ENCODE measurements at regions of chr4 and their contacts with region 1.

Region 1: GRCh38 chr4:129822708-129823504 is 727.0 kb downstream of the C4orf33 start:
- DNase-seq: peak; percentile 12 to 18
- ATAC-seq: peak in 4 of 8 donors; percentile 11 to 49 (median 36)
- H3K4me3 ChIP-seq: no peak overlapping the region
- H3K27ac ChIP-seq: no peak overlapping the region
- H3K4me1 ChIP-seq: peaks cover 0 to 14% (median 0%) of the 10 kb centered on the region in 9 donors
- H3K27me3 ChIP-seq: no peaks in the 10 kb centered on the region
- CTCF ChIP-seq: no peak

Region 2: GRCh38 chr4:129852434-129852833 is 29.5 kb after region 1 on chr4:
- intact Hi-C with region 1: no loop called
- DNase-seq: no peak
- ATAC-seq: no peak
- H3K4me3 ChIP-seq: no peak overlapping the region
- H3K27ac ChIP-seq: no peak overlapping the region
- H3K4me1 ChIP-seq: no peaks in the 10 kb centered on the region
- H3K27me3 ChIP-seq: no peaks in the 10 kb centered on the region
- CTCF ChIP-seq: no peak

Region 3: DNA sequence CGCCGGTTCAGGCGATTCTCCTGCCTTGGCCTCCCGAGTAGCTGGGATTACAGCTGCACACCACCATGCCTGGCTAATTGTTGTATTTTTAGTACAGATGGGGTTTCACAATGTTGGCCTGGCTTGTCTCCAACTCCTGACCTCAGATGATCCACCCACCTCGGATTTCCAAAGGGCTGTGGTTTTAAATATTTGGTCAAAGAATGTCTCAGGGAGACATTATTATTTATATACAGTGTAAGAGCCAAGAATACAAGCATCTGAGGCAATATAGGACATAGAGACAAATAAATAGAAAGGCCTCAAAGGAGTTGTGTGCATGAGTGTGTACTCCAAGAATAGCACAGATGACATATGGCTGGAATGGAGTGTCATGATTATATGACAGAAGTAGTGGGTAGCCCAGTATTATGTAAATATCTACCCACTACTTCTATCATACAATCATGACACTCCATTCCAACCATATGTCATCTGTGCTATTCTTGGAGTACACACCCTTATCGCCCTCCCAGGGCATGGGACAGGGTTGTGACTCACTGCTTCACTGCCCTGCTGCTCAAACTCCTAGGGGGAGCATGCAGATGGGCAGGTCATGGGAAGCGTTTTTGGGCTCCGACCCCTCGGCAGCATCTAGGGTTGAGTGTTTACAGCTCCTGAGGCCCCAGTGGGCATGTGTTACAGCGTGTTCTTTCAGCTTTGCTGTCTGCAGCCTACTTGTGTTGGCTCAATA is 1676.4 kb after region 1 on chr4:
- intact Hi-C with region 1: loop called in 1 of 10 experiments (anchors 5 kb)
- DNase-seq: no peak
- ATAC-seq: no peak
- H3K4me3 ChIP-seq: no peak overlapping the region
- H3K27ac ChIP-seq: no peak overlapping the region
- H3K4me1 ChIP-seq: no peaks in the 10 kb centered on the region
- H3K27me3 ChIP-seq: no peaks in the 10 kb centered on the region
- CTCF ChIP-seq: no peak